ENCODE measurements at regions of chr22 and their contacts with region 1.

Region 1: GRCh38 chr22:49767355-49768062 is 60.2 kb downstream of the BRD1 start:
- DNase-seq: peak in 1 of 3 donors; percentile 37
- ATAC-seq: no peak
- H3K4me3 ChIP-seq: no peak overlapping the region
- H3K27ac ChIP-seq: no peak overlapping the region
- H3K4me1 ChIP-seq: no peaks in the 10 kb centered on the region
- H3K27me3 ChIP-seq: no peaks in the 10 kb centered on the region

Region 2: DNA sequence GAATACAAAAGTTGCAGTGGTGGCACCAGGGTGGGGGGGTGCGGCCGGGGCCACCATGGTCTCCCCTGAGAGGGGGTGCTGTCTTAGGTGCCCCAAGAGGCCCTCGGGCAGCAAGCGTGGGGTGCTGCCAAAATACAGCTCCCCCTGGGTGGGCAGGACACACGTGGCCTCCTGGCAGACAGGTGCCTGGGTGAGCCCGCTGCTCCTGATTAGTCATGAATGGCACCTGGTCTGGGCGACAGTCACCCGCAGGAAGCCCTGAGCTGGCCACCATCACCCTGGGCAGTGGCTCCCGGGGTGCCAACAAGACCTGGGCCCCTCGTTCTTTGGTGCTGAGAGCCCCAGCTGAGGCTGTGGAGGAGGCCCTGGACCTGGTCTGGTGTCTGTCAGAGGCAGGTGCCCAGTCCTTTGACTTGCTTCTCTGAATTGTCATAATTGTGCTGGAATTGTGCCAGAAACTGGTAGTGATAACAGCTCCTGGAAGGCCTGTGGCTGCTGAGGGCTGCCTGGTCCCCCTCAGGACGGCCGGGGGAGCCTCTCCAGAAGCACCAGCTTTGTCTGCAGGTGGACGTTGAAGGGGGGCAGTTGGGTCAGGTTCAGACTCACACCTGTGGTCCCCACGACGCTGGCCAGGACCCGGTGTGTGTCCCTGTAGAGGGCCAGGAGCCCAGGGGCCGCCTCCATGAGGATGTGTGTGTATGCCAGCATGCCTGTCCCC is 136.0 kb after region 1 on chr22:
- intact Hi-C with region 1: loop called in 1 of 4 experiments (anchors 10 kb)
- DNase-seq: peak in 1 of 3 donors; percentile 58
- ATAC-seq: peak in 1 of 2 donors; percentile 18
- H3K4me3 ChIP-seq: no peak overlapping the region
- H3K27ac ChIP-seq: no peak overlapping the region
- H3K4me1 ChIP-seq: no peaks in the 10 kb centered on the region
- H3K27me3 ChIP-seq: no peaks in the 10 kb centered on the region

Region 3: GRCh38 chr22:49917974-49918910 is 150.7 kb after region 1 on chr22 and contains the starts of genes ALG12 and CRELD2:
- intact Hi-C with region 1: loop called in 1 of 4 experiments (anchors 10 kb)
- DNase-seq: peak; percentile 99
- ATAC-seq: peak; percentile 98
- H3K4me3 ChIP-seq: peak within 1 kb of the TSS; percentile 85
- H3K27ac ChIP-seq: peak within 1 kb of the TSS; percentile 91
- H3K4me1 ChIP-seq: peaks cover 7% of the 10 kb centered on the region
- H3K27me3 ChIP-seq: no peaks in the 10 kb centered on the region
- total RNA-seq, gene ALG12: 13.2 to 19.7 (median 17.4) TPM
- total RNA-seq, gene CRELD2: 22.1 to 40.0 (median 26.8) TPM

Measured in right cardiac atrium (tissue), 5 donors.